ENCODE measurements at regions of chr16 and their contacts with region 1.

Region 1: DNA sequence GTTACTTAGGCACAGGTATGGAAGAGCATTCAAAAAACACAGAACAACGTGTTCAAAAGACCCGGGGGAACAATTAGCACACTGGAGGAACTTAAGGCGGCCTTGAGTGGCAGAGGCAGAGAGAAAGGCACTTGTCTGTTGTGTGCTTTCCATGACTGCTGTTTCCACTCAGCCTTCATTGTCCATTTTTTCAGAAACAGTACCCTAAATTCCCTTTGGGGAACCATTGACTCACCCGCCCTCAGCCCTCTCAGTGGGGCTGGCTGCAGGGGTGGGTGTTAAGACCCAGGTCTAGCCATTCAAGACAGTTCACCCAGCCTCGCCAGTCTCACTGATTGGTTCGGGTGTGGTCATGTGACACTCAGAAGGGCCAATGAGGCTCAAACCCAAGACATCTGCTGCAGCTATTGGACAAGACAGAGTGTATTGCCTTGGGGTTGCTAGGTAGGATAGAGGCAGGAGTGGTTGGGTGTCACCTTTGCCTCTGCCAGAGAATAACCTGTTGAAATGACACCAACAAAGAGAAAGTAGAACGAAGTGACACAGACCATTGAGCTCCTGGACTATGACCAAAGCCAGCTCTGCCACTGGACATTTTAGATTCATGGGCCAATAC is 19.6 kb upstream of the CEP20 start:
- DNase-seq: no peak
- H3K4me3 ChIP-seq: no peak overlapping the region
- H3K27ac ChIP-seq: no peak overlapping the region
- H3K4me1 ChIP-seq: no peaks in the 10 kb centered on the region
- H3K27me3 ChIP-seq: no peaks in the 10 kb centered on the region
- CTCF ChIP-seq: no peak
- POLR2A ChIP-seq: no peak

Region 2: GRCh38 chr16:15843635-15844279 is 64.2 kb before region 1 on chr16:
- intact Hi-C with region 1: loop called (anchors 2 kb)
- DNase-seq: no peak
- H3K4me3 ChIP-seq: no peak overlapping the region
- H3K27ac ChIP-seq: no peak overlapping the region
- H3K4me1 ChIP-seq: no peaks in the 10 kb centered on the region
- H3K27me3 ChIP-seq: no peaks in the 10 kb centered on the region
- CTCF ChIP-seq: no peak
- POLR2A ChIP-seq: no peak

Region 3: DNA sequence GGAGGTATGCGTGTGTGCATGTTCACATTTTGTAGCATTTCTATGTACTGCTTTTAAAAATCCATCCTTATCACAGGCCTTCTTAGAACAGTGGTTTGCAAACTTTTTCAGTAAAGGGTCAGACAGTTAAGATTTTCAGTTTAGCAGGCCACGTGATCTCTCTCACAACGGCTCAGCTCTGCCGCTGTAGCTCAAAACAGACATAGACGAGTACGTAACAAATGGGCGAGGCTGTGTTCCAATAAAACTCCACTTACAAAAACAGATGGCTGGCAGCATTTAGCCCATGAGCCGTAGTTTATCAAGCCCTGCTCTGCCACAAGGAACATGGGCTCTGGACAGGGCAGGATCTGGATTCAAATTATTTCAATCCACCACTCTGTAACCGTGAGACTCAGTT is 1421.0 kb after region 1 on chr16:
- intact Hi-C with region 1: no loop called
- DNase-seq: no peak
- H3K4me3 ChIP-seq: no peak overlapping the region
- H3K27ac ChIP-seq: peak overlapping the region in 1 of 2 donors; percentile 66
- H3K4me1 ChIP-seq: no peaks in the 10 kb centered on the region
- H3K27me3 ChIP-seq: no peaks in the 10 kb centered on the region
- CTCF ChIP-seq: no peak
- POLR2A ChIP-seq: no peak

Measured in breast epithelium (tissue), 4 donors.